ENCODE measurements at regions of chr17 and their contacts with region 1.

Region 1: DNA sequence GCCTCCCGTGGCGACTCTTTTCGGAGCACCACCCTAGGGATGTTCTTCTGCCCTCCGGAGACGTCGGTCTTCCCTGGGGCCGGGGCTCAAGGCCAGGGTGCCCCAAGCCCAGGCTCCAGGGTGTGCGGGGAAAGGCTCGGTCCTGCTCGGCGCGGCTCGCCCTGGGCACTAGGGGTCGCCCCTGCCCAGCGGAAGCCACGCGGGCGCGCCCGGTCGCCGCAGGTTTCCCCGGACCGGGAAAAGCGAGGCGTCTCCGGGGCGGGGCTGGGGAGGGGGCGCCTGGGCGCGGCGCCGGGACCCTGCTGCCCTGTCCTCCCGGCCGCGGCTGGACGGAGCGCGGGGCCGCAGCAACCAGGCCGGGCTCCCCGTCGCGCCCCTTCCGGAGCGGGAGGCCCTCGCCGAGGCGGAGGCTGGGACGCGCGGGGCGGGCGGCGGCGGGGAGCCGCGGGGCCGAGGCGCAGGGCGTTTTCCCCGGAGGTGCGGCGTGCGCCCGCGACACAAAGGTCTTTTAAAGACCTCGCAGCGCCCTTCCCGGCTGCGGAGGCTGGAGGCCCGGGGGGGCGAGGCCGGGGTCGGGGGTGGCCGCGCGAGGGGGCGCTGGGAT is 76.4 kb downstream of the MRC2 start:
- DNase-seq: peak in 9 of 10 donors; percentile 61 to 91 (median 73)
- H3K4me3 ChIP-seq: peak overlapping the region; percentile 48 to 94 (median 78)
- H3K27ac ChIP-seq: peak overlapping the region in 58 of 59 donors; percentile 52 to 95 (median 91)
- H3K27me3 ChIP-seq: no peaks in the 10 kb centered on the region
- CTCF ChIP-seq: peak; percentile 54 to 97 (median 84)

Region 2: GRCh38 chr17:62671583-62672312 is 32.1 kb before region 1 on chr17:
- intact Hi-C with region 1: no loop called
- DNase-seq: no peak
- H3K4me3 ChIP-seq: no peak overlapping the region
- H3K27ac ChIP-seq: no peak overlapping the region
- H3K27me3 ChIP-seq: no peaks in the 10 kb centered on the region
- CTCF ChIP-seq: no peak

Region 3: DNA sequence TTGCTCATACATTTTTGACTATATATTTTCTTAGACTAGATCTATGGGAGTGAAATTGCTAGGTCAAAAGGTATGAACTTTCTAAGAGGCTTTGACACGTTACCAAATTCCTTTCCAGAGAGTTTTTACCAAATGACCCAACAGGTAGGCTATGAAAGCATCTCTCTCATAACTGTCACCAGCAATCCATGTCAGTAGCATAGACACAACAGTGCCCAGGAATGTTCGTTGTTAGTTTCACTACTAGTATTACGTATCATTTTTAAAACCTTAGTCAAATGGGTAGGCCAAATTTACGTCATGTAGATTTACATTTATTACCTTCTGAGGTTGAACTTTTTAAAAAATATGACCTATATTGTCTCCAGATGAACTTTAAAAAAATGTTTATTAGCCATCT is 37.4 kb after region 1 on chr17:
- intact Hi-C with region 1: no loop called
- DNase-seq: no peak
- H3K4me3 ChIP-seq: no peak overlapping the region
- H3K27ac ChIP-seq: no peak overlapping the region
- H3K27me3 ChIP-seq: no peaks in the 10 kb centered on the region
- CTCF ChIP-seq: no peak

Region 4: DNA sequence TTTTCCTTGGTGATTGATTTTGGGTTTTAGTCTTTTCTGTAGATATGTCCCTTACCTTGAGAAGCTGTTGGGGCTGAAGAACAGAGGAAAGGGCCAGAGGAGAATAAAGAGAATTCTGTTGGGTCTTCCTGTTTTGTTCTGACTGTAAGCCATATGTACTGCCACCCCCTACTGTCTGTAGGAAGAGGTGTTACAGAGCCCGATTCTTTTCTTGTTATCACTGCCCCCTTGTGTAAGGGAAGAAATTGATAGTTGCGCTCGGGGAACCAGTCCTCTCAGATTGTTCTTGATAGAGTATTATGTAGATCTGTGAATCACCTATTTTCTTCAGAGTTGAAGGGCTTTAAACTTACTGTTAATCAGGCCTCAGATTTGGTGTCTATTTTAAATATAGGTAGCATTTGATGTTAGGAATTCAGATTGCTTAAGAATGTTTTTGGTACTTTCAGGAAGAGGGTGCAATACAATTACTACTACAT is 264.6 kb after region 1 on chr17:
- intact Hi-C with region 1: loop called (anchors 1 kb)
- DNase-seq: peak in 3 of 10 donors; percentile 21 to 60 (median 44)
- H3K4me3 ChIP-seq: peak overlapping the region; percentile 25 to 97 (median 86)
- H3K27ac ChIP-seq: peak overlapping the region in 24 of 59 donors; percentile 1 to 98 (median 28)
- H3K27me3 ChIP-seq: no peaks in the 10 kb centered on the region
- CTCF ChIP-seq: peak; percentile 65 to 94 (median 87)